ENCODE measurements at regions of chr2 and their contacts with region 1.

Region 1: GRCh38 chr2:71545572-71546274 is 92.4 kb downstream of the DYSF start:
- DNase-seq: peak; percentile 64
- ATAC-seq: peak; percentile 86
- H3K4me3 ChIP-seq: peak overlapping the region in 2 of 3 experiments; percentile 10 to 29; a peak in 2 of 6 replicates
- H3K27ac ChIP-seq: no peak overlapping the region
- H3K4me1 ChIP-seq: peaks cover 37% of the 10 kb centered on the region
- H3K27me3 ChIP-seq: peaks cover 2 to 31% of the 10 kb centered on the region in 2 experiments; a peak in 4 of 5 replicates
- CTCF ChIP-seq: peak; percentile 97
- EP300 ChIP-seq: no peak
- POLR2A ChIP-seq: no peak
- RAD21 ChIP-seq: peak; percentile 88

Region 2: GRCh38 chr2:69724540-69725159 is 1821.1 kb before region 1 on chr2:
- CTCF ChIA-PET with region 1: no interaction called
- POLR2A ChIA-PET with region 1: no interaction called
- in situ Hi-C with region 1: no loop called
- intact Hi-C with region 1: no loop called
- DNase-seq: peak; percentile 77
- ATAC-seq: peak; percentile 91
- H3K4me3 ChIP-seq: peak overlapping the region; percentile 42 to 65 (median 58)
- H3K27ac ChIP-seq: no peak overlapping the region
- H3K4me1 ChIP-seq: peaks cover 30% of the 10 kb centered on the region
- H3K27me3 ChIP-seq: no peaks in the 10 kb centered on the region
- CTCF ChIP-seq: peak; percentile 99
- EP300 ChIP-seq: no peak
- POLR2A ChIP-seq: no peak
- RAD21 ChIP-seq: peak; percentile 97

Region 3: GRCh38 chr2:71778936-71779773 is 233.4 kb after region 1 on chr2:
- CTCF ChIA-PET with region 1: no interaction called
- POLR2A ChIA-PET with region 1: no interaction called
- in situ Hi-C with region 1: no loop called
- intact Hi-C with region 1: no loop called
- DNase-seq: no peak
- ATAC-seq: no peak
- H3K4me3 ChIP-seq: no peak overlapping the region
- H3K27ac ChIP-seq: no peak overlapping the region
- H3K4me1 ChIP-seq: peaks cover 13% of the 10 kb centered on the region
- H3K27me3 ChIP-seq: peaks cover 2 to 10% of the 10 kb centered on the region in 2 experiments; a peak in 3 of 5 replicates
- CTCF ChIP-seq: peak; percentile 10; the same call in 1 of the 2 replicates
- EP300 ChIP-seq: no peak
- POLR2A ChIP-seq: no peak
- RAD21 ChIP-seq: no peak

Region 4: DNA sequence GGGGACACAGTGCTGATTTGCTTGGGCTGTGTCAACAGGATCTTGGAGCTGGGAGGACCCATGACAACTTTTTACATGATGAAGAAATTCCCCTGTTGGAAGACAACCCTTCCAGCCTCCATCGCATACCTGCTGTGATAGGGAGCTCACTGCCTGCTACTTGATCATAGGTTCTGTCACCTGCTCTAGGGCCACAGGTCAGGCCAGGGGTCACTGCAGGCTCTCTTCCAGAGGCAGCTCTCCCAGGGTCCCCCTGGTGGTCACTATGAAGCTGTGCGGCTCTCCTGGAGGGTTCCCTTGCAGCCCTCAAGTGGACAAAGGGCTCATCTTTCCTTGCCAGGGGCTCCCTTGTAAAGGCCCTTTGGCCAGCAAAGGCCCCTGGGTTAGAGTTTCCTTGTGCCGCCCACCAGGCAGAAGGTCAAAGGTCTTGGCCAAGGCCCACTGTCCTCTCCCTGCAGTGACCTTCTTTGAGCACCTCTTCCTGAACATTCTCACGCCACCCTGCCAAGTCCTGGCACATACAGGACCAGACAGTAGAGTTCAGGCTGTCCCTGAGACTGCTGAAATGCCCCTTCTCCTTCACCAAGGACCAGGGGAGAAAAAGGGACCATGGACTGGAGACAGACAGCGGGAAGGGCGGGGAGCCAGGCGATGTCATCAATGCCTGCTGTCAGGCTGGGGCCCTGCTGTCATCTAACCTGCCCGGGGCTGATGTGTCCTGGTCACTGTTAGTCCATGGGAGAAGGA is 252.7 kb after region 1 on chr2:
- CTCF ChIA-PET with region 1: interaction called, 35 read pairs
- POLR2A ChIA-PET with region 1: no interaction called
- in situ Hi-C with region 1: loop called (anchors 5 kb)
- intact Hi-C with region 1: loop called (anchors 1 kb)
- DNase-seq: peak; percentile 61
- ATAC-seq: peak; percentile 92
- H3K4me3 ChIP-seq: no peak overlapping the region
- H3K27ac ChIP-seq: no peak overlapping the region
- H3K4me1 ChIP-seq: peaks cover 5% of the 10 kb centered on the region; the same call in 1 of the 2 replicates
- H3K27me3 ChIP-seq: peaks cover 0 to 31% of the 10 kb centered on the region in 2 experiments; a peak in 4 of 5 replicates
- CTCF ChIP-seq: peak; percentile 88
- EP300 ChIP-seq: no peak
- POLR2A ChIP-seq: no peak
- RAD21 ChIP-seq: peak; percentile 92

Region 5: DNA sequence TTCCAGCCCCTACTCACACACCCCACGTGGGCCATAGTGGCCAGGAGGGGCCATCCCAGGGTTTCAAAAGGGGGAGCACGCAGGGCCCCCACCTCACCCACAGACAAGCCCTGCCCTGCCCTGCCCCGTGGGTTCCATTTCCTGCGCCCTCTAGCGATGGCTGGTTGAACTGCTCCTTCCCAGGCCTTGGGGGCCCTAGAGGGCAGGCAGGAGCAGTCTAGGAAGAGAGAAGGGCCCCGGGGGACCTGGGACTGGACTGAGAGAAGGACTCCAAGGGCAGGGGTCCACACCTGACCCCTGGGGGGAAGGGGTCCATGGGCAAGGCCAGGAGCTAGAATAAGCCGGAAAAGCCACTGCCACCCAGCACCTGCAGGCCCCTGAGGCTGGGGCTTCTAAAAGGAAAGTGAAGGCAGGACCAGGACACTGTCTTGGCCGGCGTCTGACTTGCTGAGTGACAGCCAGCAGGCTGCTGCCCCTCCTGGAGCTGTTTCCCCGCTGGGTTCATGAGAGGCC is 591.8 kb after region 1 on chr2:
- CTCF ChIA-PET with region 1: interaction called, 3 read pairs
- POLR2A ChIA-PET with region 1: no interaction called
- in situ Hi-C with region 1: no loop called
- intact Hi-C with region 1: loop called (anchors 2 kb)
- DNase-seq: peak; percentile 58
- ATAC-seq: peak; percentile 88
- H3K4me3 ChIP-seq: peak overlapping the region; percentile 26 to 63 (median 41); a peak in 3 of 6 replicates
- H3K27ac ChIP-seq: no peak overlapping the region
- H3K4me1 ChIP-seq: peaks cover 24% of the 10 kb centered on the region
- H3K27me3 ChIP-seq: peaks cover 20 to 84% of the 10 kb centered on the region in 2 experiments
- CTCF ChIP-seq: peak; percentile 96
- EP300 ChIP-seq: no peak
- POLR2A ChIP-seq: no peak
- RAD21 ChIP-seq: peak; percentile 72

Region 6: DNA sequence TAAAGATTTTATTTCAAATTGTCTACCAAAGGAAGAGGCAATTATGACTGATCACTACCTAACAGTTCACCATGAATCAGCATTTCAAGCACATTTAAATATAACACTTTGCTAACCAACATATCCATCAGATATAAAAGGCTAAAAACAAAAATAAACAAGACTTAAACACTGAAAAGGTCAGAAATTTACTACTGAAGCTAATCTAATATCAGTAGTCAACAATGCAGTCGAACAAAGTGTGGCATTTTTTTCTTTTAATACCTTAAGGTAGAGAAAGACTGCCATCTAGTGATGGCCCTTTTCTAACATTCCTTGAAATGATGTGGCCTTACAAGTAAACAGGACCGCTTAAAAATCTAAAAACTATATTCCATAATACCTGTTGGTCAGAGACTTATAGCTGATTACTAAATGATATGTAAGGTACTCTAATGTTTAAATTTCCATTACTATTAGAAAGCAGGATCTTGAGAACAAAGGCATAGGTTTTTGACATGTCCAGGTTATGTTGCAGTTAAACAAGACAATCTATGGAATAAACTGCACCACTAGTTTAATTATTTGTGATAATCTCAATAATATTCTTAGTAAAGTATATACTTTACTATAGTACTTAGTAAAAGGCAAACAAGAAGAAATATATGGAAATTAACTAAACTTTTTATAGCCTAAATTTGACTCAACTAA is 1200.1 kb after region 1 on chr2:
- CTCF ChIA-PET with region 1: no interaction called
- POLR2A ChIA-PET with region 1: no interaction called
- in situ Hi-C with region 1: loop called (anchors 25 kb)
- intact Hi-C with region 1: loop called (anchors 5 kb)
- DNase-seq: peak; percentile 81
- ATAC-seq: peak; percentile 62; the same call in 2 of the 3 replicates
- H3K4me3 ChIP-seq: no peak overlapping the region
- H3K27ac ChIP-seq: no peak overlapping the region
- H3K4me1 ChIP-seq: peaks cover 21% of the 10 kb centered on the region
- H3K27me3 ChIP-seq: no peaks in the 10 kb centered on the region
- CTCF ChIP-seq: peak; percentile 85
- EP300 ChIP-seq: no peak
- POLR2A ChIP-seq: no peak
- RAD21 ChIP-seq: peak; percentile 87

Measured in HepG2 (cell line).